A549 (cell line): ENCODE measurements at regions of chr14 and their contacts with region 1.

Region 1: DNA sequence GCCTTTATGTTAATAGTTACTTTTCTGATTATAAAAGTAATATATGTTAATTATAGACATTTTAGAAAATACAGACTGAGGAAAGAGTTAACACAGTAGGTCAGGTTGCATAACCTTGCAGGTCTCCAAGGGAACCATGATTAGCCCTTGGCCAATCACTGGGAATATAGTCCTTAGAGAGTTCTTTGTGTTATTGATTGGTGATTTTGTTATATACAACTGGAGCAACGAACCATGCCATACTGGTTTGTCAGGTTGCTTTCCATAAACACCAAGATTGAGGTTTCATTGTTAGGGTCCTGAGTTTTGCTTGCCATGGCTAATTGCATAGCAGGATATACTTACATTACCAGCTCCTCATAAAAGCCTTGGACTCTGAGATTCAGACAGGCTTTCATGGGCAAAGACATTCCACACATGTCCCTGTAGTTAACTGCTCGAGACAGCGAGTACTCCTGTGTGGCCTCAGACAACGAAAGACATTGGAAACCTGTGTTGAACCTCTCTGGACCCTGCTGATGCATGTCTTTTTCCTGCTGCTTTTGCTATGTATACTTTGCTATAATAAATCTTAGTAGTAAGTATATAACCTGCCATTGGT is 33.7 kb downstream of the MAPK1IP1L start:
- DNase-seq: no peak
- ATAC-seq: no peak
- H3K4me3 ChIP-seq: no peak overlapping the region
- H3K27ac ChIP-seq: no peak overlapping the region
- H3K4me1 ChIP-seq: no peaks in the 10 kb centered on the region
- CTCF ChIP-seq: no peak
- EP300 ChIP-seq: no peak
- POLR2A ChIP-seq: no peak
- RAD21 ChIP-seq: no peak

Region 2: GRCh38 chr14:55051426-55052268 is 33.5 kb before region 1 on chr14 and contains the start of gene MAPK1IP1L:
- CTCF ChIA-PET with region 1: interaction called, 14 read pairs
- POLR2A ChIA-PET with region 1: no interaction called
- DNase-seq: peak; percentile 90 to 91
- ATAC-seq: peak; percentile 95 to 96
- H3K4me3 ChIP-seq: peak within 1 kb of the TSS; percentile 95
- H3K27ac ChIP-seq: peak within 1 kb of the TSS; percentile 98 to 100
- H3K4me1 ChIP-seq: peaks cover 29% of the 10 kb centered on the region
- CTCF ChIP-seq: peak; percentile 88
- EP300 ChIP-seq: 0 out of 5 replicates have a peak, but pooled peaks of 1 of the 2 experiments have one; percentile 10
- POLR2A ChIP-seq: peak; percentile 92
- RAD21 ChIP-seq: peak; percentile 31 to 61; a peak in 4 of 5 replicates
- polyA plus RNA-seq, gene MAPK1IP1L: 72.3 and 76.1 TPM in 2 replicates

Region 3: DNA sequence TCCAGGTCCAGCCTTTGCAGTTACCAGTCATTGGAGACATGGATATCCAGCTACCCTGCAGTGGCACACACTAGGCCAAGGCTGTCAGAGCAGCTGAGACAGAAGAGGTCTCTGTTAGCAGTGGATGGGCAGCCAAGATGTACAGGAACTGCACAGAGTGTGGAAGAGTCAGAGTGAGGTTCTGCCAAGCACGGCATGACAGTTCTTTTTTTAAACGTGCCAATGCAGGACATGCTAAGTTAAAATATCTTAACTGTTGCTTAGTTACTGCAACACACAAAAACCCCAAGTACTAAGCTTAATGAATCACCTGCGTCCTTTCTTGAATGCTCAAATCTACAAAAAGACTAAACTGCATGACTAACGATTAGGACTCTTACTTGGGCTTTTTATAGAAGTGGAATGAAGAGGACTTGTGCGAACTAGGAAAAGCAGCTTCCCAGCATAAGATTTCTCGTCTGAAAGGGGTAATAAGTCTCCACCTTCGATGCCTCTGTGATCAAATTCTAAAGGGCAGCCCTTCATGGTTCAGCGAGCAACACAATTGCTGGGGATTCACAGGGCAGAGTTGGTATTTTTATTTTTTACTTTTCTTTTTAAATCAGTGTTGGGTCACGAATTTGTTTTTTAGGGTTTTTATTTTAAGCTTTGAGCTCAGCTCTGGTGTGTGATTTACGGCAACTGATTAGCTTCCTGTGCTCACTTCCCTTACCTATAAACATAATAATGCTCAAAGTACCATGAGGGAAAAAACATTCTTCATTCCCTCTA is 13.1 kb before region 1 on chr14:
- CTCF ChIA-PET with region 1: interaction called, 23 read pairs
- POLR2A ChIA-PET with region 1: no interaction called
- DNase-seq: peak in 1 of 2 experiments; percentile 32
- ATAC-seq: peak; percentile 51 to 58; a peak in 5 of 6 replicates
- H3K4me3 ChIP-seq: no peak overlapping the region
- H3K27ac ChIP-seq: no peak overlapping the region
- H3K4me1 ChIP-seq: peaks cover 3% of the 10 kb centered on the region; the same call in 1 of the 3 replicates
- CTCF ChIP-seq: no peak
- EP300 ChIP-seq: no peak
- POLR2A ChIP-seq: no peak
- RAD21 ChIP-seq: no peak

Region 4: DNA sequence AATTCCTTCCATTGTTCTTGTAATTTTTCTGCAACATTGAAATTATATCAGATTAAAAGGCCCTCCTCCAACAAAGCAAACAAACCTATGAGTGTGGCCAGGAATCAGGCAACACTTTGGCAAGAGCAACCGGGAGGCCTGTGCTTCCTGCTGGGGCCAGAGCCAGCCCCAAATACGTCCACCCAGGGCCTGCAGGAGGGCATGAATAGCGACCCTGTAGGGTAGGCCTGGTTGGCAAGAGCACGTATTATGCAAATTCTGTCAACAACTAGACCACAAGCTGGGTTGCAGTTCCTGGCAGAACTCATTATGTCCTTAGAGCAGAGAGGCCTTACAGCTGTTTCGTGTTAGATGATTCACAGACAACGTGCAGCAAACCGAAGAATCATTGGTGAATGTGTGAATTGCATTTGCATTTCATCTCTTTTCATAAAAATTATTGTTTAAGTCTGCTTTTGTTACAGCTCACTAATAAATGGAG is 17.0 kb after region 1 on chr14:
- CTCF ChIA-PET with region 1: interaction called, 34 read pairs
- POLR2A ChIA-PET with region 1: no interaction called
- DNase-seq: peak; percentile 62 to 84
- ATAC-seq: peak; percentile 69 to 76
- H3K4me3 ChIP-seq: peak overlapping the region; percentile 33; the same call in 2 of the 3 replicates
- H3K27ac ChIP-seq: peak overlapping the region; percentile 91 to 93
- H3K4me1 ChIP-seq: peaks cover 27% of the 10 kb centered on the region
- CTCF ChIP-seq: no peak
- EP300 ChIP-seq: no peak
- POLR2A ChIP-seq: no peak; the same call in 1 of the 2 replicates
- RAD21 ChIP-seq: no peak; a peak in 1 of 5 replicates

Region 5: GRCh38 chr14:55129428-55130195 is 44.5 kb after region 1 on chr14:
- CTCF ChIA-PET with region 1: interaction called, 22 read pairs
- POLR2A ChIA-PET with region 1: interaction called, 5 read pairs
- DNase-seq: peak; percentile 72 to 82
- ATAC-seq: peak; percentile 87 to 88
- H3K4me3 ChIP-seq: peak overlapping the region; percentile 69
- H3K27ac ChIP-seq: peak overlapping the region; percentile 76 to 93
- H3K4me1 ChIP-seq: peaks cover 19% of the 10 kb centered on the region
- CTCF ChIP-seq: no peak
- EP300 ChIP-seq: no peak
- POLR2A ChIP-seq: no peak
- RAD21 ChIP-seq: no peak

Region 6: DNA sequence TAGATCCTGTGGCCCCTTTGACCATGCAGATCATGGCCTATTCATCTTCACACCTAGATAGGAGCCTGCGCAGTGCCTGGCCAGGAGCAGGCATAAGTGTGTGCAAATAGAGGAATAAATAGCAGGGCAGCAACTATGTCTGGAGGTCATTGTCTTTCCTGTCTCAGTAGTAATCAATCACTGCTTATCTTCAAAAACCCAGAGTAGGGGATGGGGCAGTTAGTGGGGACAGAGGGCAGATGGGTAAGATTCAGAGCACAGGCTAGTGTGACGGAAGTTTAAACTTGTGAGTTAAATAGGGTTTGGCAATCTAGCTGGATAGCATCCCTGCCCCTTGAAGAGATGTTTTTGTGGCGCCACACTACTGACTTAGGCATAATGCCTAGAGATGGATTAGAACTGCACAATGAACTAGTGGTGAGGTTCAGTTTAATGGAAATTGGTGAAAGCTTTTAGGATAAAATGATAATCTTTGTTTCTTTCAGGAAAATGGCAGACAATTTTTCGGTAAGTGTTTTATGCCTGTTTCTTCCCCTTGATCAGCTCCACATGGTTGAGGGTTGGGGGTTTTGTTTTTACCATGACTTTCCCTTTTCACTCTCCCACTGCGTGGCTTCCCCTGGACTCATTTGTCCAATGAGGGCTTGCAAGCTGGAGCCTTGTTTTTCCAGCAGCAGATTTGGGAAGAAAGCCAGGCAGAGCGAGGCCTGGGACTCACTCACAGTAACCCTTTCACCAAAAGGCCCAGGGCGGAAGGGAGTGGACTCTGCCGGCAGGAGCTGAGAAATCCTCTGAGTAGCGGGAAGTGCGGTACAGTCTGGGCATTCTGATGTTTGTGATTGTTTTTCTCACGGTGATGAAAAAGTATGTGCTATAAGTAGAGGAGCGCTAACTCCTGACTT is 52.0 kb after region 1 on chr14:
- CTCF ChIA-PET with region 1: interaction called, 22 read pairs
- POLR2A ChIA-PET with region 1: no interaction called
- DNase-seq: no peak
- ATAC-seq: no peak
- H3K4me3 ChIP-seq: no peak overlapping the region
- H3K27ac ChIP-seq: no peak overlapping the region
- H3K4me1 ChIP-seq: no peaks in the 10 kb centered on the region
- CTCF ChIP-seq: no peak
- EP300 ChIP-seq: no peak
- POLR2A ChIP-seq: no peak
- RAD21 ChIP-seq: no peak

Region 7: GRCh38 chr14:55152052-55152753 is 67.0 kb after region 1 on chr14:
- CTCF ChIA-PET with region 1: interaction called, 183 read pairs
- POLR2A ChIA-PET with region 1: no interaction called
- DNase-seq: no peak
- ATAC-seq: no peak
- H3K4me3 ChIP-seq: no peak overlapping the region
- H3K27ac ChIP-seq: no peak overlapping the region
- H3K4me1 ChIP-seq: no peaks in the 10 kb centered on the region
- CTCF ChIP-seq: no peak
- EP300 ChIP-seq: no peak
- POLR2A ChIP-seq: no peak
- RAD21 ChIP-seq: no peak

Region 8: DNA sequence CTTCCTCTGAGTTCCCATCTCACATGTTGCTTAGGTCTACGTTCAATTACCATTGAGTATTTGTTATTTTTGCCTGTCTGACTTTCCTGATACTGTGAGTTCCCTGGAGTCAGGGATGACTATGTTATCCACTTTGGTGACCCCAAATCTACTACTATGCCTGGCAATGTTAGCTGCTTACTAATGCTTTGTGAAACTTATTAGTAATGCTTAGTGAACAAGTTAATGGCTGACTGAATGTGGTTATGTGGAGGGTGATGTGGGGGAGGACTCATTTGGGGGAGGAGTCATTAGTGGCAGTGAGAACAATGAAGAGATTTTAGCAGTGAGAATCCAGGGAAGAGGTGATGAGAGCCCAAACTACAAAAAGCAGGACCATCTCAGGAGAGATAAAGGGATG is 616.5 kb after region 1 on chr14:
- CTCF ChIA-PET with region 1: no interaction called
- POLR2A ChIA-PET with region 1: no interaction called
- DNase-seq: peak in 1 of 2 experiments; percentile 33
- ATAC-seq: no peak
- H3K4me3 ChIP-seq: no peak overlapping the region
- H3K27ac ChIP-seq: peak overlapping the region; percentile 36 to 81; a peak in 4 of 6 replicates
- H3K4me1 ChIP-seq: peaks cover 58% of the 10 kb centered on the region
- CTCF ChIP-seq: no peak
- EP300 ChIP-seq: no peak
- POLR2A ChIP-seq: no peak
- RAD21 ChIP-seq: no peak